Mammary epithelial cell (primary cell): ENCODE measurements at regions of chr3 and their contacts with region 1.

Region 1: DNA sequence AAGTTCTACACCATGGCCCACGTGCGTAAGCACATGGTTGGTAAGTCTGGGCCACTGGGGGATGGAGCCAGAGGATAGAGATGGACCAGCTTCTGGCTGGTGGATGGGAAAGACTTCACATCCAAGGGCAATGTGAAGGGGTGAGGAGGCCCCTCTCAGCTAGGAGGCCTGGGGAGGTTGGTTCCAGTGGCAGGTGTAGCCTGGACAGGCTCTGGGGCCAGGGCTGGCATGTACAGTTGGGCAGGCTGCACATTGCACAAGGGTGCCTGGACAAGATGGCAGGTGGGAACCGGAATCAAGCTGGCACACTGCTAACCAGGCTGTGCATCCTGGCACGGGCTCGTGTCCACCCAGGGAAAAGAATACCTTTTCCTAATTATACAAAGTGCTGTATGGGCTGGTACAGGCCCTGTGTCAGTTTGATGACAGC is 8.1 kb downstream of the ZBTB47 start:
- DNase-seq: no peak
- H3K4me3 ChIP-seq: no peak overlapping the region
- H3K27ac ChIP-seq: no peak overlapping the region
- H3K4me1 ChIP-seq: no peaks in the 10 kb centered on the region
- H3K27me3 ChIP-seq: no peaks in the 10 kb centered on the region
- CTCF ChIP-seq: no peak

Region 2: DNA sequence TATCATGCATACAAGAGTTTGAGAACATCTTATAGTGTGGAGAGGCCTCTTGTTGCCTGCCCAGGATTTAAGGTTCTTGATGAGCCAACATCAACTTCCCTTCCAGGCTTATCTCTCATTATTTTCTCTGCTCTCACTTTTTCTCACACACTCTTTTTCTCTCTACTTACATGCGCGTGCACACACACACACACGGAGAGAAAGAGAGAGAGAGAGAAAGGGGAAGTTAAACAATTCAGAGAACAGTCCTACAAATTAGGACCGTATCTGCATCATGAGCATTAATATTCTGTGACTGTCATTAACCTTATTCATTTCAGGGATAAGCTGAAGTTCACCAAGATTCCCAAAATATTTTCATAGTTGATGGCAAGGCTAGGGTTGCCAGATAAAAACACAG is 1867.9 kb before region 1 on chr3:
- CTCF ChIA-PET with region 1: no interaction called
- dilution Hi-C with region 1: no loop called
- in situ Hi-C with region 1: no loop called
- intact Hi-C with region 1: no loop called
- DNase-seq: no peak
- H3K4me3 ChIP-seq: no peak overlapping the region
- H3K27ac ChIP-seq: no peak overlapping the region
- H3K4me1 ChIP-seq: no peaks in the 10 kb centered on the region
- H3K27me3 ChIP-seq: no peaks in the 10 kb centered on the region
- CTCF ChIP-seq: no peak

Region 3: DNA sequence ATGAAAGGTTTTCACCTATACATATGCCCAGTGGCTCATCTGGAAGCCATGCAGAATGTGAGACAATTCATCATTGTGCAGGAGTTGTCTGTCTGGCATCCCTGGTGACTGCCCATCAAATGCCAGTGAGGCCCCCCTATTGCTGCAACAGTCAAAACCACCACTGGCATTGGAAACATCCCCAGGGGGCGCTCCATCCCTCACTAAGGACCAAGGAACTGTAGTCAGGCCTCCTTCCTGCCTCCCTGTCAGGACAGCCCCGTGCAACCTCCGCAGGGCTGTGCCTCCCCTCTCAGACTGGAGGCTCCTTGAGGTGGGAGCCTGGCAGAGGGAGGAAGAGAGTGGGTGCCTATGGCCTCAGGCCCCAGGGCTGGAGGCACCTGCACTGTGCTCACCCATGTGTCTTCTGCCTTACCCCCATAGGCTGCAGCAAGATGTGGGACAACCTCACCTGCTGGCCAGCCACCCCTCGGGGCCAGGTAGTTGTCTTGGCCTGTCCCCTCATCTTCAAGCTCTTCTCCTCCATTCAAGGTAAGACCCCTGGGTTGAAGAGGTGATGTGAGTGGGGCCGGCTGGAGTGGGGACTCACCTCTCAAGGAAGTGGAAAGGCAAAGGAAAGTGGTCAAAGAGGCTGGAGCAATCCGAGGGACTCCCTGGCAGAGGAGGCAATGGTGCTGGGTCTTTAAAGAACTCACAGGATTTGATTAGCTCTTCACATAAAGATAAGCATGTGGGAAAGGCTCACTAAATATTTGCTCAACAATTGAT is 142.6 kb before region 1 on chr3:
- CTCF ChIA-PET with region 1: no interaction called
- dilution Hi-C with region 1: no loop called
- in situ Hi-C with region 1: no loop called
- intact Hi-C with region 1: no loop called
- DNase-seq: no peak
- H3K4me3 ChIP-seq: no peak overlapping the region
- H3K27ac ChIP-seq: no peak overlapping the region
- H3K4me1 ChIP-seq: peaks cover 27% of the 10 kb centered on the region
- H3K27me3 ChIP-seq: no peaks in the 10 kb centered on the region
- CTCF ChIP-seq: peak in 1 of 2 donors; percentile 7

Region 4: DNA sequence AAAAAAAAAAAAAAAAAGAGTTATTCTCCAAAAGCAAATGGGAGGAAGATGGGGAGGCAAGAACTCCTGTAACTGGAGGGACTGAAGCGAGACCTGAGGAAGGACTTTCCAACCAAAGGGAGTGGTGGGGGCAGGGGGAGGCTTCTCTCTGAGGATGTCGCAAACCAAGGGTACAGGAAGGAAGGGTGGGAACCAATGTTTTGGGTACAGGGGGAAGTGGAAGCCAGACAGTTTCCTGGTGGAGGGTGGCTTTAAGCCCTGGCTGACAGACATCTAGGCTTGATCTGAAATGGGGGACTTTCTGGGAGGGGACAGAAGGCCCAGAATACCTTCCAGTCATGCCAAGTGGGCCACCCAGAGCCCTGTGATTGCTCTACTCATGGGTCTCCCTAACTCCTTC is 132.1 kb before region 1 on chr3:
- CTCF ChIA-PET with region 1: no interaction called
- dilution Hi-C with region 1: no loop called
- in situ Hi-C with region 1: no loop called
- intact Hi-C with region 1: no loop called
- DNase-seq: no peak
- H3K4me3 ChIP-seq: no peak overlapping the region
- H3K27ac ChIP-seq: no peak overlapping the region
- H3K4me1 ChIP-seq: peaks cover 3% of the 10 kb centered on the region
- H3K27me3 ChIP-seq: no peaks in the 10 kb centered on the region
- CTCF ChIP-seq: no peak

Region 5: GRCh38 chr3:42590989-42591756 is 70.4 kb before region 1 on chr3:
- CTCF ChIA-PET with region 1: interaction called, 10 read pairs
- dilution Hi-C with region 1: no loop called
- in situ Hi-C with region 1: no loop called
- intact Hi-C with region 1: no loop called
- DNase-seq: no peak
- H3K4me3 ChIP-seq: peak overlapping the region; percentile 81 to 84 (median 83)
- H3K27ac ChIP-seq: peak overlapping the region; percentile 83
- H3K4me1 ChIP-seq: peaks cover 14% of the 10 kb centered on the region
- H3K27me3 ChIP-seq: no peaks in the 10 kb centered on the region
- CTCF ChIP-seq: no peak

Region 6: DNA sequence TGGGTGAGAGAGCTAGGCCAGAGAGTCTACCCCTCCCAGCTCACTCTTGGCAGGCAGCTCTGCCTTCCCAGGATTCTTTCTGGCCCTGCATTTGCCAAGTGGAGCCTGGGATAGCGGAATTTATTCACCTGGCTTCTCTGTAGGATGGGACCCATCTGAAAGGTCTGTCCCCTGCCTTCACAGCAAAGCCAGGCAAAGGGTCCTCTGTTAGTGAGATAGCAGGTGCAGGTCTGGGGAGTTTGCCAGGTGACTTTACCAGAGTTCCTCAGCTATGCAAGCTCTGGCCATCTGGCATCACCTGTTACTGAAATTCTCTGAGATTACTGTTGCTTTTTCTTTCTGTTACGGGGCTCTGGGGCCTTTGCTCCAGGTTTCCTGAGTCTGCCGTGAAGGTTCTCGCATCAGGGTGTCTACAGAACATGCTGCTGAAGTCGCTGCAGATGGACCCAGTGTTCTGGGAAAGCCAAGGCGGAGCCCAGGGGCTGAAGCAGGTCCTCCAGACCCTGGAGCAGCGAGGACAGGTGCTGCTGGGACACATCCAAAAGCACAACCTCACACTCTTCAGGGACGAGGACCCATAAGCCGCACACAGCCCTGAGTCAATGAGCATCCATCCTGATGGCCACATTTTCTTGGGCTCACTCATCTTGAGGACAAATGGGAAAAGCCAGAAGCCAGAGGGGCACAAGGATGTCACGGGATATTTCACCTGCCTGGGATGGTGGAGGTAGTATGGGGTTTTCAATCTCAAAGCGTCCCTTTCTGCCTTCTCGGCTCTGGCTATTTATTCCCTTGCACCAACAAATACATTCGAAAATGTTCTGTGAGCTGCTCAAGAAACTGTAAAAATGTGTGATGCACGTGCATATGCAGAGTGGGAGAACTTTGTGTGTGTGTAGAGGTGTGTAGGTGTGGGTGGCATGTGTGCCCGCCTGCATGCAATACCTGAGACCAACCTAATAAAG is 394.5 kb after region 1 on chr3:
- CTCF ChIA-PET with region 1: no interaction called
- dilution Hi-C with region 1: no loop called
- in situ Hi-C with region 1: no loop called
- intact Hi-C with region 1: no loop called
- DNase-seq: no peak
- H3K4me3 ChIP-seq: no peak overlapping the region
- H3K27ac ChIP-seq: no peak overlapping the region
- H3K4me1 ChIP-seq: no peaks in the 10 kb centered on the region
- H3K27me3 ChIP-seq: peaks cover 3% of the 10 kb centered on the region
- CTCF ChIP-seq: no peak